Posterior vena cava (tissue), 2 donors: ENCODE measurements at regions of chr3 and their contacts with region 1.

Region 1: GRCh38 chr3:46909535-46910442 is 32.3 kb downstream of the PTH1R start:
- DNase-seq: peak; percentile 96

Region 2: DNA sequence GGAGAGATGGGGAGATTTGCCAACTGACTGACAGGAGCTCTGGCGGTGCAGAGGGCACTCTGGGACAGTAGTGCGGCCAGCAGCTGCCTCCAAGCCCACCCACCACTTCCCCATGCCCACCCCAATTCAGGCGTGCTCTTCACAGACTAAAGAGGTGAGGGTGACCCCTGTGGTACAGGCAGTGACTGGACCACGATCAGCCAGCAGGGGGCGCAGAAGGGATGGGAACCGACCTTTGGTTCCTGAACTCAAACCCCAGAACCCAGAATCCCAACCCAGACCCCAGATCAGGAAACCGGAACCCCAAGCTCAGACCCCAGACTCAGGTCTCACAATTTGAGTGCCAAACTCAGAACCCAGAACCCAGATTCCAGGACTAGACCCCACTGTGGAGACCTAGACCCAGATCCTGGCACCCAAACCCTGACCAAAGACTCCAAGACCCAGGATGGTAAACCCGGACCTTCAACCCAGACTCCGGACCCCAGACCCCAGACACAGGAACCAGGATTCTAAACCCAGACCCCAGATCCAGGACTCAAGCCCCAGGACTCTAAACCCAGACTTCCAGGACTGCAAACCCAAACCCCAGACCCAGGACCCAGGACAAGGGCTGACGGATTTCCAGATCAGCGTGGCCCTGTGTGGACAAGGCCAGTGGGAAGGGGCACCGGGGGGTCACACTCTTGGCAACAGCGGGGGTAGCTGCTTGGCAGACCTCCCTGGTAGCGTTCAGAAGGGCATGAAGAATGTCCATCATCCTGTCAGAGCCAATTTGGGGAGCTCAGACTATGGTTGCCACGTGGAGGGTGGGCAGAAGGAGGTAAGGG is 42.9 kb before region 1 on chr3:
- intact Hi-C with region 1: loop called in 1 of 2 experiments (anchors 5 kb)
- DNase-seq: peak; percentile 94

Region 3: GRCh38 chr3:47186285-47186684 is 276.5 kb after region 1 on chr3:
- intact Hi-C with region 1: no loop called
- DNase-seq: no peak

Region 4: DNA sequence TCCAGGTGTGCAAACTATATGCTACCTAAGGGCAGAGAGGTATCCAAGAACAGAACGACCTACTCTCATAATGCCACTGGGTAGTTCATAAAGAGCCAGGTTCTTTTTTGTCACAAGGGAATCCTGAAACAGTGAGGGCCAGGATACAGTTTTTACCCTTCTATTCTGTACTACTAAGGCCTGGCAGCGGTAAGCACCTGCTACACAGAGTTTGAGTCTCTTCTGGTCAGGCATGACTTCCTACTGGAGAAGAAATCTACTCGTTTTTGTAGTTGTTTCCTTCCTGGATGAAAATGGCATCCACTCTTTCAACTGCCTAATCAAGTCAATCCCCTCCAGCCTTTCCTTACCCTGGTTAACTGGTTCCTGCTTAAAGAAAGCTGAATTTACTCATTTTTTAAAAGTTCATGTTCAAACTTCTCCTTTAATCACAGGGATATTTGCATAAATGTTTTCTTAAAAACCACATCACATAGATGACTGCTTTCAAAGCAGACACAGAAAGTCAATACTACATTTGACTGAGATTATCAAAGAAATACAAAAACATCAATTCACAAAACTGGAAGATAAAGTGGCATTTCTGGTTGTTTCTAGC is 1066.4 kb after region 1 on chr3:
- intact Hi-C with region 1: loop called in 1 of 2 experiments (anchors 10 kb)
- DNase-seq: no peak

Region 5: DNA sequence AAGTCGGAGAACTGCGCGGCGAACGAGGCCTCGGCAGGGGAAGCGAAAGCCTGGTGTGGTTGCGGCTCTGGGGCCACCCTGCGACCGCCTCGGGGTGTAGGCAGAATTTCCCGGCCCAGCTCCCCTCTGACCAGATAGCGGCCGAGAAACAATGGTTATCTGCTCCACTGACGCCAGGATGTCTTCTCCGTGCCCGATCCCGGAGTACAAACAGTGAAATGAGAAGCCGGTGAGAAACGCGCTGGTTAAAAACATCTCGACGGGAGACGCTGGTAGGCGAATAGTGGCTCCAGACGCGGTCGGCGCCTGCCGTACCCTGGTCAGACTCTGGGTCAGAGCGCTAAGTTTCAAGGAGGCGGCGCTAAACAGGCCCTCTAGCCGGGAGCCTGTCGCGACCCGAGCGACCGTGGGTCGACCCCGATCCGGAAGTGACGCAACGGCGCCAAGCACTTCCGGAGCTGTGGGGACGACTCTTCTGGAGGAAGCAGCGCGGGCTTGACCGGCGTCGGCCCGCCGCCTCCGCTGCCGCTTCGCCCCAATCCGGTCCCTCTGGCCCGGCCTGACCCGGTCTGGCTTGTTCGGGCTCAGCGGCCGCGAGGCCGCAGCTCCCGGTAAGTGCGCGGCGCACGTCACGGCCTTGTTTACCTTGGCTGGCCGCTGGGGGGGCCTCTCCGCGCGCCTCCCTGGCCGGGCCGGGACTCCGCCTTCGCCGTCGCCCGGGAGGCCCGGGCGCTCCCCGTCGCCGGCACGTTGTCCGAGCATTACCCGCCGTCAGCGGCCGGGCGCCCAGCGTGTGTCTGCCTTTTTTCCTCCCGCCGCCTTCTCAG is 2008.8 kb after region 1 on chr3 and contains the start of gene ARIH2:
- intact Hi-C with region 1: no loop called
- DNase-seq: peak; percentile 98
- total RNA-seq, gene ARIH2: 59.2 to 84.6 TPM